Ovary (tissue), 10 donors: ENCODE measurements at regions of chr1 and their contacts with region 1.

Region 1: DNA sequence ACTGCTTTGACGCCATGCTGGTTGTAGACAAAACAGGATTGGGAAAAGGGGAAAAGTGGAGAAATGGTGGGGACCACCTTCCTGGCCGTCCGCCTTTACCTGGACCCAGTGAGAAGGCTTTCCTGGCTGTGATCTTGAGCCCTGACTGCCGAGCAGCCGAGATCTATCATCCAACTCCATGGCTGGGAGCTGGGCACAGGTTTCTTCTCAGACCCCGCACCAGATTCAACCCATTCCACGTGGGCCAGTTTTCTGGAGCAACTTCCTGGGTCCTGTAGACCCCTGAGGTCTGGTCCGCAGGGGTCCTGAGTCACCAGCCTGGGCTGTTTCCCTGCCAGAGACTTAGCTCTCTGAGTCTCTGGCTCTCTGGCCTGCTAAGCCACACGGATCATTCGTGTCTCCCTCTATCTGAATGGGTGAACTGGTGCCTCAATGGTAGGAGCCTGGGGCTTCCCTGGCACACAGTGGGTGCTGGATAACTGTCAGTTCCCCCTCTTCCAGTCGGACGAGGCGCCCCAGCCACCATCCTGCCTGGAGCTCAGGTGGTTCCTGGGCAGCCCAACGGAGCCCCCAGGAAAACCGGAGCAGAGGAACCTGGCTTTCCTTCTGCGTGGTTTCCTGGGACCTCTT is 4.5 kb upstream of the NPHP4 start:
- DNase-seq: peak in 1 of 5 donors; percentile 13
- H3K4me3 ChIP-seq: no peak overlapping the region
- H3K27ac ChIP-seq: no peak overlapping the region
- H3K4me1 ChIP-seq: peaks cover 4% of the 10 kb centered on the region
- H3K27me3 ChIP-seq: no peaks in the 10 kb centered on the region
- CTCF ChIP-seq: no peak
- EP300 ChIP-seq: no peak
- POLR2A ChIP-seq: no peak

Region 2: DNA sequence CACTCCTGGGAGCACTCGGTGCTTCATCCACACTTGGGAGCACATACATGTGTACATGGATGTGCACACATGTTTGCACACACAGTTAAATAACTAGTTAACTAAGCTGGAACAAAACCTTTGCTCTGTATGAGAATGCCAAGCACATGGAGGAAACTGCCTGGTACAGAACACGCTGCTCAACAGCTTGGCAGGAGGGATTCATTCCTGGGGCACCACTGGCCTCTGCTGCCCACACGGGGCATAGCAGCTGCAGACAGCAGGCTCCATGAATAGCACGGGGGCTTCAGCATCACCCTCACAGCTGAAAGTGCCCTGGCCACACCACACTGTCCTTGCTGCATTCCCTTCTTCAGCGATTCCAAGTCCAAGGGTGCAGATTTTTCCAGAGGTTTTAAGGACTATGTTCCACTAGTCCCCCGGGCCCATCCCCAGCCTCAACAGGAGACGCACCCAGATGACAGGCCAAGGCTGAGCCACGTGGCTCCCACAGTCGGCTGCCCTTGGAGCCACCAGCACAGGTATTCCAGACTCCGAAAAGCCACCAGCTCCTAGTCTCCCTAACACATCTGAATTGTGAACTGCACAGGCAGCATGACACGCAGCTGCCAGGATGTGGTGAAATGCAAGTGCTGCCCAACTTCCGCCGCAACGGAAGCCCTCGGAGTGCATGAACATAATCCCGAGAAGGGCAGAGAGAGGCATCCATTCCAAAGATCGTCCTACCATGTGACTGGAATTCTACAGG is 21.4 kb before region 1 on chr1:
- intact Hi-C with region 1: loop called in 1 of 4 experiments (anchors 1 kb)
- DNase-seq: peak; percentile 48 to 82 (median 63)
- H3K4me3 ChIP-seq: no peak overlapping the region
- H3K27ac ChIP-seq: no peak overlapping the region
- H3K4me1 ChIP-seq: no peaks in the 10 kb centered on the region
- H3K27me3 ChIP-seq: no peaks in the 10 kb centered on the region
- CTCF ChIP-seq: peak; percentile 51 to 66 (median 55)
- EP300 ChIP-seq: no peak
- POLR2A ChIP-seq: no peak